ENCODE measurements at regions of chr20 and their contacts with region 1.

Region 1: GRCh38 chr20:31514159-31515071 is at the start of gene HM13:
- DNase-seq: peak; percentile 88
- H3K4me3 ChIP-seq: peak within 1 kb of the TSS; percentile 84 to 100 (median 99)
- H3K27ac ChIP-seq: peak within 1 kb of the TSS; percentile 77
- H3K4me1 ChIP-seq: peaks cover 17% of the 10 kb centered on the region
- H3K27me3 ChIP-seq: no peaks in the 10 kb centered on the region
- CTCF ChIP-seq: peak; percentile 86 to 91
- total RNA-seq, gene HM13: 65.2 to 184 TPM

Region 2: DNA sequence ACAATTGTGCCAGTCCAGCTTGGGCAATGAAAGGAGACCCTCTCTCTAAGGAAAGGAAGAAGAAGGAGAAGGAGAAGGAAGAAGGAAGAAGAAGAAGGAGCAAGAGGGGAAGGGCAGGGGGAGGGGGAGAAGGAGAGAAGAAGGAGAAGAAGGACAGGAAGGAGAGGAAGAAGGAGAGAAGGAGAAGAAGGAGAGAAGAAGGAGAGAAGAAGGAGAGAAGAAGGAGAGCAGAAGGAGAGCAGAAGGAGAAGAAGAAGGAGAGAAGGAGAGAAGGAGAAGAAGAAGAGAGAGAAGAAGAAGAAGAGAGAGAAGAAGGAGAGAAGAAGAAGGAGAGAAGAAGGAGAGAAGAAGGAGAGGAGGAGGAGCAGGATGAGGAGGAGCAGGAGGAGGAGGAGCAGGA is 183.5 kb before region 1 on chr20:
- CTCF ChIA-PET with region 1: no interaction called
- dilution Hi-C with region 1: no loop called
- in situ Hi-C with region 1: no loop called
- intact Hi-C with region 1: no loop called
- DNase-seq: no peak
- H3K4me3 ChIP-seq: no peak overlapping the region
- H3K27ac ChIP-seq: no peak overlapping the region
- H3K4me1 ChIP-seq: no peaks in the 10 kb centered on the region
- H3K27me3 ChIP-seq: no peaks in the 10 kb centered on the region
- CTCF ChIP-seq: no peak

Region 3: DNA sequence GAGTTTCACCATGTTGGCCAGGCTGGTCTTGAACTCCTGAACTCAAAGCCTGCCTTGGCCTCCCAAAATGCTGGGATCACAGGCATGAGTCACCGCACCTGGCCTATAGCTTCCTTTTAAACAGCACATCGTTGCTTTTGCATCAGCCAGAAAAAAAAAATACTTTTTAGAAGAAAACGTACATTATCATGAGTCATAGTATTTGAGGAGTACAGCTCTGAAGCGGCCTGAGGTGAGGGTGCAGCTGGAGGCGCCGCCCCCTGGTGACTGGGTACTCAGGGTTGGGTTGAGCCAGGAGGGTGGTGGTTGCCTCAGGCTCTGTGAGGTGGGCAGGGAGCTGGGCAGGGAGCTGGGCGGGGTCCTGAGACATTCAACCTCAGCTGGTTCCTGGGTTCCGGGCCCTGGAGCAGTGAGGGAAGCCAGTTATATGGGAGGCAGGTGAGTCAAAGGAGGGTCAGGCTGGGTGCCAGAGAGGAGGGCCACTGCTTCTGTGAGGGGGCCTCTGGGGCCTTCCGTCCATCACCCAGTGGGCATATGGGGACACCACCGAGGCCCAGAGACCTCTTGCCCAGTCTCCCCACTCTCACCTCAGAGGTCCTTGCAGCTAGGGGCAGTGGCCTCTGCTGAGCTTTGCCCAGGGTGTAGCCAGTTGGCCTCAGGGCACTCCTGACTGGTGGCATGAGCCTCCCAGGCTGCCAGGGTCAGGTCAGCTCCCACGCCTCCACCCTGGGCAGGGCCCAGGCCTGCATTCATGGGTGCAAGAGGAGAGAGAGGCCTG is 79.0 kb after region 1 on chr20:
- CTCF ChIA-PET with region 1: interaction called, 23 read pairs
- dilution Hi-C with region 1: no loop called
- in situ Hi-C with region 1: no loop called
- intact Hi-C with region 1: no loop called
- DNase-seq: peak; percentile 100
- H3K4me3 ChIP-seq: no peak overlapping the region
- H3K27ac ChIP-seq: peak overlapping the region; percentile 55
- H3K4me1 ChIP-seq: peaks cover 37% of the 10 kb centered on the region
- H3K27me3 ChIP-seq: no peaks in the 10 kb centered on the region
- CTCF ChIP-seq: peak in 1 of 2 donors; percentile 18

Region 4: GRCh38 chr20:31605031-31605901 is 90.9 kb after region 1 on chr20 and contains the start of gene ID1:
- CTCF ChIA-PET with region 1: no interaction called
- dilution Hi-C with region 1: no loop called
- in situ Hi-C with region 1: no loop called
- intact Hi-C with region 1: no loop called
- DNase-seq: peak; percentile 91
- H3K4me3 ChIP-seq: peak within 1 kb of the TSS; percentile 75 to 95 (median 92)
- H3K27ac ChIP-seq: peak within 1 kb of the TSS; percentile 85
- H3K4me1 ChIP-seq: peaks cover 52% of the 10 kb centered on the region
- H3K27me3 ChIP-seq: no peaks in the 10 kb centered on the region
- CTCF ChIP-seq: no peak
- total RNA-seq, gene ID1: 66.2 to 86.1 TPM